WTC11 (cell line): ENCODE measurements at regions of chr1 and their contacts with region 1.

Region 1: DNA sequence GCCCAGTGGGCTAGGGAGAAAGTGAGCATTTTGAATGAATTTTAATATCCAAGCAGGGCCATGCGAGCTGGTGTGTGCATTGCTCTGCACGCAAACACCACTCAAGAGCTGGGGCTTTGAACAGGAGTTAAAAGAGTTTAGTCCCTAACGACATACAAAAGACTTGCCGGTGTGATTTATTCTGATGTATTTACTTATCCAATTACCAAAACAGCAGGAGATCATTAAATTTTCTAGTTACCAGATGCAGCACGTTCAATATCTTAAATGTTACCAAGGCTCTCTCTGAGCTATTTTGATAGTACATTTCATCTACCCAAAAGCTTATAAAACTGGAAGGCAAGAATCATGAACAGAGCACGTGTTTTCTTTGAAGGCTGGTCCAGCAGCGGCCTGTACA is 30.0 kb upstream of the DMRTA2 start:
- DNase-seq: no peak
- ATAC-seq: no peak
- H3K4me3 Mint-ChIP-seq: no peak overlapping the region
- H3K27ac Mint-ChIP-seq: no peak overlapping the region
- H3K4me1 Mint-ChIP-seq: peaks cover 14% of the 10 kb centered on the region
- H3K27me3 Mint-ChIP-seq: peaks cover 7% of the 10 kb centered on the region; the same call in 1 of the 2 replicates
- CTCF ChIP-seq: no peak

Region 2: GRCh38 chr1:50940291-50940690 is 487.0 kb after region 1 on chr1:
- CTCF ChIA-PET with region 1: no interaction called
- POLR2A ChIA-PET with region 1: interaction called, 10 read pairs
- DNase-seq: no peak
- ATAC-seq: no peak
- H3K4me3 Mint-ChIP-seq: no peak overlapping the region
- H3K27ac Mint-ChIP-seq: no peak overlapping the region
- H3K4me1 Mint-ChIP-seq: peaks cover 16% of the 10 kb centered on the region
- H3K27me3 Mint-ChIP-seq: no peaks in the 10 kb centered on the region
- CTCF ChIP-seq: no peak